MCF 10A (cell line): ENCODE measurements at regions of chr2 and their contacts with region 1.

Region 1: DNA sequence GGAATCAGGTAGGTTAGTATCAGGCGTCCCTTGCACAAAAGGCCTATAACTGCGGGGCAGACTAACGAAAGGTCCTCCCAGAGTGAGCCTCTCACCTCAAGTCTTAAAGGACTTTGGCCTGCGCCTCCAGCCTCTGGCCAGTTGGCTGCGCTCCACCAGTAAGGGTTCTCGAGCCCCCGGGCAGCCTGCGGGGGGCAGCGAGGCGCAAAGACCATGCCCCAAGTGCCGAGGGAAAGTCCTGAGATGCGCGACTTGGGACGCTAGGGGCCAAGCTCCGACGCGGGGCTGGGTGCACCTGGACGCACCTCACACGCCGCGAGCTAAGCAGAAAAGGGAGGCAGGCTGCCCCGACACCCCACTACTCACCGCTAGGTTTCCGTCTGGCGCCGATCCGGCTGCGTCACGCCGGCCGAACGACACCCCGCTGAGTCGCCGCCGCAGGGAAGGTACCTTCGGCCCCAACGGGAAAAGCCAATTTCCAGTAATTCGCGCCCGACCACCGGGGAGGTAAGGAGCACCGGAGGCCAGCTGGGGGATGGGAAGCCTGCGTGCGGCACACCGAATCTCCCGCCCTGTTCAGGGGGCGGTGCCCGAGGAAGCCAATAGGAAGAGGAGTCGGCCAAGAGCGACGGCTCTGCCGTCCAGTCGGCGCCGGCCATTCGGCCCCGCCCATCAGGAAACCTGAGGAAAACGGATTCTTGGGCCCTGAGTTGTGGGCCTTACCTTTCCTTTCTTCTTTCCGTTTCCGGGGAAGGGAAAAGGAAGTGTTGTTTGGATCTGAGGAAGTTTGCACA is at the start of gene ORC2:
- DNase-seq: peak; percentile 96
- H3K4me3 Mint-ChIP-seq: peak within 1 kb of the TSS; percentile 86
- H3K27ac Mint-ChIP-seq: peak within 1 kb of the TSS; percentile 76
- H3K4me1 Mint-ChIP-seq: peaks cover 52% of the 10 kb centered on the region
- H3K27me3 Mint-ChIP-seq: no peaks in the 10 kb centered on the region
- CTCF ChIP-seq: peak; percentile 61
- total RNA-seq, gene ORC2: 51.5 and 54.4 TPM in 2 replicates

Region 2: GRCh38 chr2:200042102-200042735 is 921.1 kb before region 1 on chr2:
- CTCF ChIA-PET with region 1: no interaction called
- POLR2A ChIA-PET with region 1: no interaction called
- intact Hi-C with region 1: no loop called
- DNase-seq: no peak
- H3K4me3 Mint-ChIP-seq: no peak overlapping the region
- H3K27ac Mint-ChIP-seq: no peak overlapping the region
- H3K4me1 Mint-ChIP-seq: no peaks in the 10 kb centered on the region
- H3K27me3 Mint-ChIP-seq: no peaks in the 10 kb centered on the region
- CTCF ChIP-seq: no peak

Region 3: DNA sequence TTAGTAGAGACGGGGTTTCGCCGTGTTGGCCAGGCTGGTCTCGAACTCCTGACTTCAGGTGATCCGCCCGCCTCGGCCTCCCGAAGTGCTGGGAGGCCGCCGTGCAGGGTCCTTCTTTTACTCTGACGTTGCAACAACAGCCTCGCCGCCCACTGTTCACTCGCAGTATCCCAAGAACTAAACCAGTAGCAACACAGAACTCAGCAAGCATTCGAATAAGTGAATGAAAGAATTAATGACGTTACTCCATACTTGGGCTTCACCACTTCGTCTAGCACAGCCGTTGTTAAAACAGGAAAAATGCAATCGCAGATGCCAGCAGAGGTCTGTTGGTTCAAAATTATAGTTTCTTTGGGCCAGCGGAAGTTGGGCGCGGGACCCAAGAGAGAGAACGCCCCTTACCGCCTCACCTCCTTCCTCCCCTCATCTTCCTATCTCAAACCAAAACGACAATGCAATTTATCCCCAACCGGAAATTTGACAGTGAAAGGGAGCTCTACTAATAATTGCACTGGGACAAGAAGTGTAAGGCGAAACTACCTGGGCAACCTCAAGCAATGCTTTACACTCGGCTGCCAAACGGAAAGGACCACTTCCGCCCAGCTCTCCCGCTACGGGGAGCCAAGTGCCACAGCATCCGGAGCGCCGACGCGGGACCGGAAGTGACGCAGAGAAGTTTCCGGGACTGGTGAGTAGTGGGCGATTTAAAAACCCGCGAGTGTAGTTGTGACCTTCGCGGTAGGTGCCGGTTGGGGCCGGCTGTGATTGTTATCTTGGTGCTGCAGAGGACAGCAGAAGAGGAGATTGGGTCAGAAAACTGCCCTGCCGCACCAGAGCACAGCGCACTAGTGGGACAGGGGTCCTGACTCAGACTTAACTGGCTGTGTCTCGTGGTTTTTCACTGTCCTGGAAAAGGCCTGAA is 74.4 kb before region 1 on chr2 and contains the starts of genes NIF3L1 and PPIL3:
- CTCF ChIA-PET with region 1: interaction called, 5 read pairs
- POLR2A ChIA-PET with region 1: interaction called, 28 read pairs
- intact Hi-C with region 1: no loop called
- DNase-seq: peak; percentile 98
- H3K4me3 Mint-ChIP-seq: peak within 1 kb of the TSS; percentile 98
- H3K27ac Mint-ChIP-seq: peak within 1 kb of the TSS; percentile 98
- H3K4me1 Mint-ChIP-seq: peaks cover 21% of the 10 kb centered on the region
- H3K27me3 Mint-ChIP-seq: no peaks in the 10 kb centered on the region
- CTCF ChIP-seq: no peak
- total RNA-seq, gene NIF3L1: 19.3 and 26.1 TPM in 2 replicates
- total RNA-seq, gene PPIL3: 33.9 and 35.4 TPM in 2 replicates

Region 4: DNA sequence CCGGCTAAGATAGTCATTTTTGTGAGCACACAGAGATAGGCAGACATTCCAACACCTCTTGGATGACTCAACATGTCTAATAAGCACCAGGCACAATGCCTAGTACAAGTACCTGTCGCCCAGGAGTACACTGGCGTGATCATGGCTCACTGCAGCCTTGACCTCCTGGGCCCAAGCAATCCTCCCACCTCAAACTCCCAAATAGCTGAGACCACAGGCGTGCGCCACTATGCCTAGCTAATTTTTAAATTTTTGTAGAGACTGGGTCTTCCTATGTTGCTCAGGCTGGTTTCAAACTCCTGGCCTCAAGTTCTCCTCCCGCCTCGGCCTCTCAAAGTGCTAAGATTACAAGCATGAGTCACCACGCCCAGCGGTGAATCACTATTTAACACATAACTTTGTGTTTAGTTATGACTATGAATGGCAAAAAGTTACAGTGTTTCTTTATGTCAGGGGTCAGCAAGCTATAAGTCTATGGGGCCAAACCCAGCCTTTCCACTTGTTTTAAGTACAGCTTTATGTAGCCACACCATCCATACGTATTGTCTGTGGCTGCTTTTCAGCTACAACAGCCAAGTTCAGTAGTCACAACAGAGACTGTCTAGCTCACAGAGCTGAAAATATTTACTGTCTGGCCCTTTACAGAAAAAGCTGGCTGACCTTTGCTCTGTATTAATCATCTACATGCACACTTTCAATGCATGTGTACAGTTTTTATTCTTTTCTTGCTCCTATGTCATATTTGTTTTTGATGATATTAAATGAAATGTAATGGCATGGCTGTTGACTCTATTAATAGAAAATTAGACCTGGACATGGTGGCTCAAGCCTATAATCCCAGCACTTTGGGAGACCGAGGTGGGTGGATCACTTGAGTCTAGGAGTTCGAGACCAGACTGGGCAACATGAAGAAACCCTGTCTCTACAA is 18.6 kb before region 1 on chr2:
- CTCF ChIA-PET with region 1: no interaction called
- POLR2A ChIA-PET with region 1: interaction called, 21 read pairs
- intact Hi-C with region 1: no loop called
- DNase-seq: peak; percentile 90
- H3K4me3 Mint-ChIP-seq: no peak overlapping the region
- H3K27ac Mint-ChIP-seq: peak overlapping the region; percentile 87
- H3K4me1 Mint-ChIP-seq: peaks cover 16% of the 10 kb centered on the region
- H3K27me3 Mint-ChIP-seq: no peaks in the 10 kb centered on the region
- CTCF ChIP-seq: no peak

Region 5: GRCh38 chr2:200975672-200976071 is 12.4 kb after region 1 on chr2:
- CTCF ChIA-PET with region 1: interaction called, 11 read pairs
- POLR2A ChIA-PET with region 1: interaction called, 30 read pairs
- intact Hi-C with region 1: no loop called
- DNase-seq: no peak
- H3K4me3 Mint-ChIP-seq: no peak overlapping the region
- H3K27ac Mint-ChIP-seq: no peak overlapping the region
- H3K4me1 Mint-ChIP-seq: no peaks in the 10 kb centered on the region
- H3K27me3 Mint-ChIP-seq: no peaks in the 10 kb centered on the region
- CTCF ChIP-seq: no peak

Region 6: GRCh38 chr2:201158111-201158929 is 195.0 kb after region 1 on chr2:
- CTCF ChIA-PET with region 1: interaction called, 8 read pairs
- POLR2A ChIA-PET with region 1: interaction called, 9 read pairs
- intact Hi-C with region 1: loop called (anchors 1 kb)
- DNase-seq: peak; percentile 87
- H3K4me3 Mint-ChIP-seq: no peak overlapping the region
- H3K27ac Mint-ChIP-seq: peak overlapping the region; percentile 69
- H3K4me1 Mint-ChIP-seq: peaks cover 8% of the 10 kb centered on the region
- H3K27me3 Mint-ChIP-seq: no peaks in the 10 kb centered on the region
- CTCF ChIP-seq: peak; percentile 62

Region 7: DNA sequence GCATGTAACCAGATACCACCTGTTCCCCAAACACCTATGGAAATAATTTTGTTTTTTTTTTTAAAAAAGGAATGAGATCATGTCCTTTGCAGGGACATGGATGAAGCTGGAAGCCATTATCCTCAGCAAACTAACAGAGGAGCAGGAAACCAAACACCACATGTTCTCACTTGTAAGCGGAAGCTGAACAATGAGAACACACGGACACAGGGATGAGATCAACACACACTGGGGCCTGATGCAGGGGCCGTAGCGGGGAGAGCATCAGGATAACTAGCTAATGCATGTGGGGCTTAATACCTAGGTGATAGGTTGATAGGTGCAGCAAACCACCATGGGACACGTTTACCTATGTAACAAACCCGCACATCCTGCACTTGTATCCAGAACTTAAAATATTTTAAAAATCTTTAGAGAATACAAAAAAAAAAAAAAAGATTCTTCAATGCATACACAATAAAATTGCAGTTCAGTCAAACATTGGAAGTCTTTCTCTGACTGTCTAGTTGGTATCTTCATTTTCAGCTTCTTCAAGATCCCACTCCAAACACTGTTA is 208.0 kb after region 1 on chr2:
- CTCF ChIA-PET with region 1: interaction called, 3 read pairs
- POLR2A ChIA-PET with region 1: no interaction called
- intact Hi-C with region 1: loop called (anchors 2 kb)
- DNase-seq: no peak
- H3K4me3 Mint-ChIP-seq: no peak overlapping the region
- H3K27ac Mint-ChIP-seq: no peak overlapping the region
- H3K4me1 Mint-ChIP-seq: no peaks in the 10 kb centered on the region
- H3K27me3 Mint-ChIP-seq: no peaks in the 10 kb centered on the region
- CTCF ChIP-seq: no peak